A673 (cell line): ENCODE measurements at regions of chr16 and their contacts with region 1.

Region 1: GRCh38 chr16:64051824-64052223 is 1070.0 kb downstream of the CDH11 start:
- DNase-seq: peak; percentile 45
- H3K4me3 ChIP-seq: no peak overlapping the region
- H3K27ac ChIP-seq: no peak overlapping the region
- H3K4me1 ChIP-seq: no peaks in the 10 kb centered on the region
- H3K27me3 ChIP-seq: no peaks in the 10 kb centered on the region
- CTCF ChIP-seq: peak; percentile 60

Region 2: DNA sequence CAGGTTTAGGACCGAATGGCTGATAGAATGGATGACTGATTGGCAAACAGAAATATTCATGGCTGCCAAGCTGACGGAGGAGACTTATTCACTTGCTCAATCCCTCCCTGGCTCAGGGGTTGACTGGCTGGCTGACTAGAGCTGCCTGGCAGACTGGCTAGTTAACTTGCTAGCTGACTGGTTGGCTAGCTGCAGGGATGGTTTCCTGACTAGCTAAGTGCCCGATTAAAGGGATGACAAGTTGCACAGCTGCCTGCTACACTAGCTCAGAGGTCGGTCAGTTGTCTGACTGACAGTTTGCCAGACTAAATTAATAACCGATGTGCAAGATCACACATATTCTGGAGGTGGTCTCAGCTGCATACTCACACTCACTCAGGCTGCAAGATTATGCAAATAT is 807.2 kb before region 1 on chr16:
- CTCF ChIA-PET with region 1: no interaction called
- POLR2A ChIA-PET with region 1: no interaction called
- intact Hi-C with region 1: no loop called
- DNase-seq: no peak
- H3K4me3 ChIP-seq: no peak overlapping the region
- H3K27ac ChIP-seq: no peak overlapping the region
- H3K4me1 ChIP-seq: no peaks in the 10 kb centered on the region
- H3K27me3 ChIP-seq: peaks cover 15% of the 10 kb centered on the region
- CTCF ChIP-seq: no peak

Region 3: DNA sequence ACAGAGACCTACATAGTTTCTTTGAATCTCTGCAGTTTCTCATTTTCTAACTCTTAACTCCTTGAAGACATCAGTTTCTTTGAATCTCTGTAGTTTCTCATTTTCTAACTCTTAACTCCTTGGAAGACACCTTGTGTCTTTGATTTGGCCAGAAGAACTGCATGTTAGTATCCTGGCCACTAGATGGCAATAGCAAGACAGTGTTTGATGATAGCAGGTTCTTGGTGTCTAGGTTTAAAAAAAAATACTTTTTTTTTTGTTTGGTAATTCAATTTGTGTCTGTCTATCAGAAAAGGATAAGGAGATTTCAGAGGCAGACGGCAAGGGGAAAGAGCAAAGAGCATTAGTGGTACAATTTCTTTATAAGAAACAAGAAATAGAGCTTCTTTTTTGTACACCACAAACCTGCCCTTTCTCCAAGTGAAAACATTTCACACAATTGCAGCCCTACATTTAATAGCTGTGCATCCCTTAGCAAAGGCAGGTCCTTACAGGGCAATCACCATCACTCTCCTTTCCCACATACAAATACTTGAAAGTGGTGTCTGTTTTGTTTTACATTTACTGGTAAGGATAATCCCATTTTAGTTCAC is 690.7 kb before region 1 on chr16:
- CTCF ChIA-PET with region 1: no interaction called
- POLR2A ChIA-PET with region 1: no interaction called
- intact Hi-C with region 1: loop called (anchors 5 kb)
- DNase-seq: peak; percentile 75
- H3K4me3 ChIP-seq: no peak overlapping the region
- H3K27ac ChIP-seq: no peak overlapping the region
- H3K4me1 ChIP-seq: peaks cover 12% of the 10 kb centered on the region
- H3K27me3 ChIP-seq: no peaks in the 10 kb centered on the region
- CTCF ChIP-seq: peak; percentile 89

Region 4: DNA sequence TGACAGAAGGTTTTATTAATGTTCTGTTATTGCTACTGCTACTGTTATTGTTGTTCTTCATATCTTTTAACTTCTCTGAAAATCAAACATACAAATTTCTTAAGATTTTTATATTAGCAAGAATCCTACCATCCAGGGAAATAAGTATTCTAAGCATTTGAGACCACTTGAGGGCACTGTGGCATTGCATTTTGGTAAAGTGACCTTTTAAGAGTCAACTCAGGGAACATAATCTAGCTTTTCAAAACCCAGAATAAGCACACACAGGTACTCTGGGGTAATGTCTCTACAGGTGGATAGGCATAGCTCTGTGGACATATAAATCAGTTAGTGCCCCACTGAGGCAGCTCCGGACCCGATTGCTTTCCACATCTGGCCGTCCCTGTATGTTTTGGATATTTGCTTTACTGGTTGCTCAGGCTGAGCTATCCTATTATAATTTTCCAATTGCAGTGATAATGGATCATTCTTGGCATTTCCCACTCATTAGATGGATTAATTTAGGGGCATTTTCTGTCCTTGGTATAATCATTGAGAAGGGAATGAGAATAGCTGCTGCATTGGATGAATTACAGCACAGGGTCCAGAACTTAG is 590.5 kb before region 1 on chr16:
- CTCF ChIA-PET with region 1: no interaction called
- POLR2A ChIA-PET with region 1: no interaction called
- intact Hi-C with region 1: loop called (anchors 5 kb)
- DNase-seq: peak; percentile 57
- H3K4me3 ChIP-seq: no peak overlapping the region
- H3K27ac ChIP-seq: no peak overlapping the region
- H3K4me1 ChIP-seq: no peaks in the 10 kb centered on the region
- H3K27me3 ChIP-seq: no peaks in the 10 kb centered on the region
- CTCF ChIP-seq: peak; percentile 61